ENCODE measurements at regions of chr4 and their contacts with region 1.

Region 1: GRCh38 chr4:76179398-76180318 is 31.5 kb upstream of the NUP54 start:
- DNase-seq: peak; percentile 72
- CTCF ChIP-seq: peak; percentile 80

Region 2: DNA sequence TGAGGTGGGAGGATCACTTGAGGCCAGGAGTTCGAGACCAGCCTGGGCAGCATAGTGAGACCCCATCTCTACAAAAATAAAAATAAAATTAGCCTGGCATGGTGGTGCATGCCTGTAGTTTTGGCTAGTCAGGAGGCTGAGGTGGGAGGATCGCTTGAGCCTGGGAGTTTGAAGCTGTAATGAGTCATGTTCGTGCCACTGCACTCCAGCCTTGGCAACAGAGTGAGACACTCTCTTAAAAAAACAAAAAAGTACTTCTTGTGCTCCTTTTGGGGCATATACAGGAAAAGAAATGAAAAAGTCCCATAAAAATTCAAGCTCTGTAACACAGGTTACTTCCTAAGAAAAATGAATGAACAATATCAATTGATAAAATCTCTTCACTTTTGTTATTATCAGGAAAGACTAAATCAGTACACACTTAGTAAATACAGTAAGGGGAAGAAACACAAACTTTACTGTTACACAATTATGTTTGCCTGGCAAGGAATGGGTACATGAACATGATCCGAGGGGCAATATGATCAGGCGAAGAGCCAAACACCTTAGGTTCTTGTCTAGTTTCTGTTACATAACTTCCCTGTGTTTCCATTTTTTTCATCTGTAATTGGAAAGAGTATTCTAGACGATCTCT is 194.4 kb after region 1 on chr4:
- in situ Hi-C with region 1: loop called (anchors 25 kb)
- DNase-seq: no peak
- CTCF ChIP-seq: no peak

Region 3: DNA sequence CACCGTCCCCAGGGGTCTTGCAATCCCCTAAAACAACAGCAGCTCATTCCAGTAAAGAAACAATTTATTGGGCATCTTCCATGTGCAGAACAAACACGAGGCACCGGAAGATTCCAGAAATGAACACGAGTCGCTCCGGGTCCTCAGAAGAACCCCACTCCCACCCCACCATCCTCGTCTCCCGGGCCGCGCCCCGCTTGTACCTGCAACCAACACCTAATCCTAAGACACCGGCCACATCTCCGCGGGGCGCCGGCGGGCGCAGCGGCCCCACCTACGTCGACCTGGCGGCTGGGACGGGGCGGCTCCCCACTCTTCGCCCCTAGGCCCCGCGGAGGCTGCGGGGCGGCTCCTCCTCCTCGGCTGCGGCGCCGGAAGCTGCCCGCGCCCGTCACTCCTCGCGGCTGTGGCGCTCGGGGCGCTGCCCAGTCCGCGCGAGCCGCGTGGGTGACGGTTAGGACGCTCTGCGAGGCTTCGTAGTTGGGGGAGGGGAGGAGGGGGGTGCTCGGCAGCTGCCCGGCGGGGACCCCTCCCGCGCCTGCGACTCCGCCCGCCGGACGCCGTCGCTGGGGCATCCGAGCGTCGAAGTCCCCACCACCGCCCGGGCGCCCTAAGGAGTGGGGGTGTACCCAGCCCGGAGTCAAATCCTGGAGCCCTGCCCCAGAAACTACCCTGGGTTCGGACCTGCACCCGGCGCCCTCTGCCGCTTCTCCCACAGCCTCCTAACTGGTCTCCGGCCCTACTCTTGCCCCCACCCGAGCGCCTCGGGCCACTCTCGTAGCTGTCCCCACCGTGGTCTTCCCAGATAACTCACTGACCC is 241.3 kb after region 1 on chr4 and contains the start of gene CCDC158:
- in situ Hi-C with region 1: no loop called
- DNase-seq: peak; percentile 30
- CTCF ChIP-seq: no peak